ENCODE measurements at regions of chr6 and their contacts with region 1.

Region 1: GRCh38 chr6:142692942-142693341 is 252.0 kb downstream of the HIVEP2 start:
- DNase-seq: peak; percentile 62 to 73 (median 69)
- ATAC-seq: peak; percentile 58 to 84 (median 80)
- H3K4me3 ChIP-seq: peak overlapping the region in 3 of 12 donors; percentile 7 to 8 (median 8)
- H3K27ac ChIP-seq: peak overlapping the region in 2 of 12 donors; percentile 3 to 12
- H3K4me1 ChIP-seq: peaks cover 0 to 42% (median 5%) of the 10 kb centered on the region in 12 donors
- H3K27me3 ChIP-seq: no peaks in the 10 kb centered on the region
- CTCF ChIP-seq: peak; percentile 87 to 98 (median 94)
- POLR2A ChIP-seq: no peak

Region 2: DNA sequence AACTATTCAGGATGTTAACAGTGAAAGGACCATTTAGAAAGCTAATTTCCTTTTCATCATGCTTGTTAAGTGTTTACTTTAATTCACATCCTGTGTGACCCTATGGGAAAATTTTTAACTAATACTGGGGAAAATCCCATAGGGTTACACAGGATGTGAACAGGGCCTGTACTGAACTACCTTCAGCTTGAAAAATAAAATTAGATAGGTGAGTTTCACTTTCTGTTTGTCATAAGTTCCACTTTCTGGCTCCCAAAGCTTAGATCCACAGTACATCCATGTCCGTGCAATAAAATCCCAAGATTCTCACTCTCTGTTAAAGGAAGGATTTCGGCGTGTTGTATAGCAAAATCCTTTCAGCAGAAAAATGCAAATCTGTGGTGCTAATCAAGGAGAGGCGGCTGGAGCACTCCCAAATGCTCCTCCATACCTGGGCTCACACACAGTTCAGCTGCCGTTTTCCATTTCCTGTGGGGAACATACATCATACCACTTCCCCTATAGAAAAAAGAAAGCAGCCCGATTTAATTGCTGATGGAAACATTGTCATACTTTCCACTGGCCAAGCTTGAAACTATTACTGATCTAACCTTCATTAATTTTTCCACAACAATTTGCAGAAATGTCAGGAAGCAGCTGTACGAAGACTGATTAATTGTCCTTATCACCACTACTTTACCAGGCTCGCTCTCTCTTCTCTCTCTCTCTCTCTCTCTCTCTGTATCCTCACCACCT is 126.8 kb after region 1 on chr6:
- intact Hi-C with region 1: loop called in 1 of 10 experiments (anchors 10 kb)
- DNase-seq: no peak
- ATAC-seq: peak; percentile 22 to 75 (median 38)
- H3K4me3 ChIP-seq: peak overlapping the region in 11 of 12 donors; percentile 6 to 56 (median 44)
- H3K27ac ChIP-seq: peak overlapping the region; percentile 38 to 86 (median 75)
- H3K4me1 ChIP-seq: peaks cover 4 to 73% (median 50%) of the 10 kb centered on the region in 12 donors
- H3K27me3 ChIP-seq: no peaks in the 10 kb centered on the region
- CTCF ChIP-seq: no peak
- POLR2A ChIP-seq: no peak

Region 3: DNA sequence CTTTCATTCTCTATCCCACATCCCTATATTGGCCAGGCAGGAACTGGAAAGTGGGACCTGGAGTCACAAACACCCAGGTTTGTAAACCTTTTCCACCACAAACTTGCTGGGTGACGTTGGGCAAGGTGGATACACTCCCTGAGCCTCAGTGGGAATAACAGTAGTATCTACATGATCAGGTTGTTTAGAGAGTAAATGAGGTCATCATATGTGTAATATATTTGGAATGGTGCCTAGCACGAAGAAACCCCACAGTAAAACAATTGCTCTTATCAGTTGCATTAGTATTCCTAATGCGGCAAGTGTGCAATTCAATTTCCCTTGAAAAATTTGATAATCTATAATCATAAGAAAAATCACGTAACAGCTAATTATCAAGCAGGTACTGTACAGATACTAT is 200.1 kb after region 1 on chr6:
- intact Hi-C with region 1: loop called in 5 of 10 experiments (anchors 5 to 10 kb)
- DNase-seq: no peak
- ATAC-seq: peak in 2 of 4 donors; percentile 14 to 32
- H3K4me3 ChIP-seq: peak overlapping the region in 2 of 12 donors; percentile 8 to 21
- H3K27ac ChIP-seq: no peak overlapping the region
- H3K4me1 ChIP-seq: peaks cover 0 to 20% (median 12%) of the 10 kb centered on the region in 12 donors
- H3K27me3 ChIP-seq: no peaks in the 10 kb centered on the region
- CTCF ChIP-seq: no peak
- POLR2A ChIP-seq: no peak

Region 4: GRCh38 chr6:143026696-143027449 is 333.9 kb after region 1 on chr6:
- intact Hi-C with region 1: loop called (anchors 1 to 5 kb)
- DNase-seq: peak in 4 of 5 donors; percentile 23 to 38 (median 36)
- ATAC-seq: peak in 3 of 4 donors; percentile 65 to 78 (median 68)
- H3K4me3 ChIP-seq: no peak overlapping the region
- H3K27ac ChIP-seq: no peak overlapping the region
- H3K4me1 ChIP-seq: no peaks in the 10 kb centered on the region
- H3K27me3 ChIP-seq: no peaks in the 10 kb centered on the region
- CTCF ChIP-seq: peak; percentile 55 to 76 (median 66)
- POLR2A ChIP-seq: no peak

Region 5: DNA sequence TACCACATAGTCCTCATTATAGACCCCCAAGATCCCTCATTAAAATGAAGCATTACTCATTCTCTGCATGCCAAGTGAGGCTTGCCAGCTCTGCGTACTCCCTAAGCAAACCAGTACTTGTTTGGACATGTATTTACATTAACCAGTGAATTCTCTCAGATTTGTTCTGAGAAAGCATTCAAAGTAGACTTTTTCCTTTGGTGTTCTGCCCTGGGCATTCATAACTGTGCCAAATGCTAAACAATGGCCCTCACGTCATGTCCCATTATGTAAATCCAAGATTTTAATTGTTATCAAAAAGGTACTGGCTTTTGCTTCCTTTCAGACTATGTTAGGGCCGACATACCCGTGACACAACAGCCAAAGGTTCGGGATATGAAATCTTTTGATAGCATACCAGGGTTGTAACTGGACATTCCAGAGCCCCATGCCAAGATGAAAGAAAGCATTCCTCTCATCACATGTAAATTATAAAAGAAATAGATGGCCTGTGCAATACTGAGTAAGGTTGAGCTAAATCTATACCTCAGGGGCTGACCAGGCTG is 593.4 kb after region 1 on chr6:
- intact Hi-C with region 1: loop called in 1 of 10 experiments (anchors 10 kb)
- DNase-seq: no peak
- ATAC-seq: peak in 2 of 4 donors; percentile 20 to 44
- H3K4me3 ChIP-seq: no peak overlapping the region
- H3K27ac ChIP-seq: peak overlapping the region in 4 of 12 donors; percentile 10 to 39 (median 20)
- H3K4me1 ChIP-seq: peaks cover 0 to 11% (median 4%) of the 10 kb centered on the region in 12 donors
- H3K27me3 ChIP-seq: no peaks in the 10 kb centered on the region
- CTCF ChIP-seq: no peak
- POLR2A ChIP-seq: no peak

Measured in heart left ventricle (tissue), 16 donors.